Aorta (tissue), 5 donors: ENCODE measurements at regions of chr14 and their contacts with region 1.

Region 1: GRCh38 chr14:94136575-94137331 is 7.3 kb upstream of the IFI27L2 start:
- DNase-seq: peak; percentile 92 to 96
- ATAC-seq: peak; percentile 92
- H3K4me3 ChIP-seq: no peak overlapping the region
- H3K27ac ChIP-seq: no peak overlapping the region
- H3K4me1 ChIP-seq: no peaks in the 10 kb centered on the region
- H3K27me3 ChIP-seq: no peaks in the 10 kb centered on the region

Region 2: DNA sequence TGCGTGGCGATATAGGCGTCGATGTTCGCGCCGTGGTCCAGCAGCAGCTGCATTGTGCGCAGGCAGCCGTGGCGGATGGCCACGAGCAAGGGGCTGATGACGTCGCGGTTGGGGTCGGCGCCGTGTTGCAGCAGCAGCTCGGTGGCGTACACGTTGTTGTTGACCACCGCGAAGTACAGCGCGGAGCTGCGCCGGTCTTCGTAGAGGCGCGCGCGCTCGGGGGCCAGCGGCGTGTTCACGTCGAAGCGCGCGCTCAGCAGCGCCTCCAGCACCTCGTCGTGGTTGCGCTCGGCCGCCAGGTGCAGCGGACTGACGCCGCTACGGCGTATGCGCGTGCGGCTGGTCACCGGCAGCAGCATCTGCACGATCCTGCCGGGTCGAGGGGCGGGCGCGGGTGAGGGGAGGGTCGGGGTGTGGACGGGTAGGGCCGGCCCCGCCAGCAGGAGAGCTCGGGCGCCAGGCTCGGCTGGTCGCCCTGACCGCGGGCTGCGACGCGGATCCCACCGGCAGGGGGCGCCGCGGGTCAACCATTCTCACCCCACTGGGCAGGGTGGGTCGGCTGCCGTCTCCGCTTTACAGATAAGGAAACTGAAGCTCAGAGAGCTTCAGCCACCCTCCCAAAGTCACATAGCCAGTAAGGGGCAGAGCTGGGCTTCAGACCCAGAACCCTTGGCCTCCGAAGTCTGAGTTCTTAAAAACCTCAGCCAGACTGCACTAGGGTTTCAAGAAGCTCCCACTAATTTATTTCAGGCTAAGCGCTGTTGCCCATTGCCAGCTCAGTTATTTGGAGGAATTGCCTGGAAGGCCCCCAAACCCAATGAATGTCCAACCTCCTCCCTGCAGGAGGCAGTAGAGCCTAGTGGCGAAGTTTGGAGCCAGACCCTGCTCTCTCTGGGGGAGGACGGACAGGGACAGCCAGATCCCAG is 197.2 kb before region 1 on chr14:
- intact Hi-C with region 1: loop called in 1 of 2 experiments (anchors 5 kb)
- DNase-seq: peak; percentile 90 to 95
- ATAC-seq: peak; percentile 87
- H3K4me3 ChIP-seq: no peak overlapping the region
- H3K27ac ChIP-seq: peak overlapping the region; percentile 16 to 37
- H3K4me1 ChIP-seq: no peaks in the 10 kb centered on the region
- H3K27me3 ChIP-seq: no peaks in the 10 kb centered on the region

Region 3: GRCh38 chr14:93953263-93953662 is 183.5 kb before region 1 on chr14:
- intact Hi-C with region 1: no loop called
- DNase-seq: no peak
- ATAC-seq: no peak
- H3K4me3 ChIP-seq: no peak overlapping the region
- H3K27ac ChIP-seq: no peak overlapping the region
- H3K4me1 ChIP-seq: no peaks in the 10 kb centered on the region
- H3K27me3 ChIP-seq: no peaks in the 10 kb centered on the region

Region 4: DNA sequence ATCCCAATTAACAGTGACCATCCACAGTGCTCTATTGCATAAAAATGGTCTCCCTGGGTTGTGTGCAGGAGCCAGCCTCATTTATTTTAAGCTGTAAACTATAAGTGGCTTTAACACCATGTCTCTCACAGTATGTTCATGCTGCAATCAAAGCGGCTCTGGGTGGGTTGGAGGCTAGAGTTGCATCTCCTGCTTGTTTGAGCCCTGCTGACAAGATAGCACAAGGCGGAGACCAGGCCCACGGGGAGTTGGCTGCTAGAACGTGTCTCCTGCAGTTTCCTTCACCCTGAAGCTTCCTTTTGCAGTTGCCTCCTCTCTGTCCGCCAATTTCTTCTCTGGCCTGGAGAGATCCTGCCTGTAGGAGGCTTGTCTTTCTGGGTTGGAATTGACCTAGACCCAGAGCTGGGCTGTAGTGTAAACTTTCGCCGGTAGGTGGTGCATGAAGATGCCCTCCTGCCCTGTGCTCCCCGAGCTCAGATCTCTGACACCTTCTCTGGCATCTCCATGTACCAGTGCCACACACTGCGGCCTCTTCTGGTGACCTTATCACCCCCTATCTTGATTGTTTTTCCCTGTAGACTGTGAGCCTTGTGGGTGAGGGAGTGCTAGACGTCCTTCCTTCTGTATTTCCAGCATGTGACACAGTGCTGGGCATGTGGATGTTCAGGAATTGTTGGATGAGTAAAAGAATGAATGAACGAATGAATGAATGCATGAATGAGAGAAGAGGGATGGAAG is 100.3 kb before region 1 on chr14:
- intact Hi-C with region 1: loop called (anchors 1 to 2 kb)
- DNase-seq: peak; percentile 75 to 88
- ATAC-seq: peak; percentile 72
- H3K4me3 ChIP-seq: no peak overlapping the region
- H3K27ac ChIP-seq: no peak overlapping the region
- H3K4me1 ChIP-seq: no peaks in the 10 kb centered on the region
- H3K27me3 ChIP-seq: no peaks in the 10 kb centered on the region

Region 5: GRCh38 chr14:94175011-94175745 is 38.4 kb after region 1 on chr14:
- intact Hi-C with region 1: loop called in 1 of 2 experiments (anchors 5 kb)
- DNase-seq: peak in 1 of 2 donors; percentile 73
- ATAC-seq: peak; percentile 19
- H3K4me3 ChIP-seq: peak overlapping the region; percentile 44 to 68
- H3K27ac ChIP-seq: no peak overlapping the region
- H3K4me1 ChIP-seq: no peaks in the 10 kb centered on the region
- H3K27me3 ChIP-seq: no peaks in the 10 kb centered on the region